PC-3 (cell line): ENCODE measurements at regions of chr2 and their contacts with region 1.

Region 1: DNA sequence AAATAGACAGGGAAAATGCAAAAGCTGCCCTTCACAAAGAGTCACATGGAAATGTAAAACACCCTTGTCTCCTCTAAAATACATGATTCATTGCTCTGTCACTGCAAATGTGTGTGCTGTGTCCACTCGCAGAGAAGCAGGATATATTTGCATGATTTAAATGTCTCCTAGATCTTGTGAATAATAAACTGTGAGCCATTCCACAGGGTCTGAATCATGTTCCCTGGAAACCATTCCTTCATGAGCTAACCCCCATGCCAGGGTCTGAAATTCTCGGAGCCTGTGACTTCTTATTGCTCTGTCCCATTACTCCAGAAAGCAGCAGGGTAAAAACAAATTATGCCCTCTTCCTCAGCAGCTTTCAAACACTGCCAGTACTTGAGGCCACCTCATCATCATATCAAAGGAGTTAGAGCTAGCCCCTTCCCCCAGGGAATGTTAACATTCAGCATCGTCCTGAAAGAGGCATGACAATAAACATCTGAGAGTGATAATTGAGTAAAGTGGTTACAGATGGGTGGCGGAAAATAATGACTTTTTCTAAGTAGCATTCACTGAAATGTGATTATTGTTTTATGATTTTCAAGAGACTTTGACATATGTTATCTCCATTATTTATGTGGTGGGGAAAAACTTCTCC is 11.7 kb upstream of the CNGA3 start:
- DNase-seq: peak; percentile 95
- ATAC-seq: peak; percentile 100
- H3K4me3 ChIP-seq: peak overlapping the region; percentile 39
- H3K27ac ChIP-seq: peak overlapping the region; percentile 90
- H3K4me1 ChIP-seq: peaks cover 18% of the 10 kb centered on the region
- H3K27me3 ChIP-seq: no peaks in the 10 kb centered on the region
- CTCF ChIP-seq: no peak

Region 2: GRCh38 chr2:98356729-98357128 is 22.2 kb after region 1 on chr2:
- CTCF ChIA-PET with region 1: no interaction called
- POLR2A ChIA-PET with region 1: no interaction called
- intact Hi-C with region 1: loop called (anchors 1 kb)
- DNase-seq: peak; percentile 94
- ATAC-seq: peak; percentile 88
- H3K4me3 ChIP-seq: peak overlapping the region; percentile 13; the same call in 1 of the 2 replicates
- H3K27ac ChIP-seq: peak overlapping the region; percentile 81
- H3K4me1 ChIP-seq: peaks cover 31% of the 10 kb centered on the region
- H3K27me3 ChIP-seq: no peaks in the 10 kb centered on the region
- CTCF ChIP-seq: no peak